ENCODE measurements at regions of chr17 and their contacts with region 1.

Region 1: GRCh38 chr17:75271233-75271954 is 363 bp upstream of the MIF4GD start:
- DNase-seq: peak; percentile 80 to 96 (median 90)
- ATAC-seq: peak; percentile 96
- H3K4me3 ChIP-seq: peak overlapping the region; percentile 75
- H3K4me3 Mint-ChIP-seq: peak overlapping the region; percentile 67 to 87 (median 84)
- H3K27ac ChIP-seq: peak overlapping the region; percentile 84
- H3K27ac Mint-ChIP-seq: peak overlapping the region; percentile 57 to 90 (median 85)
- H3K4me1 ChIP-seq: peaks cover 15 to 24% of the 10 kb centered on the region in 2 donors
- H3K4me1 Mint-ChIP-seq: peaks cover 5 to 41% (median 34%) of the 10 kb centered on the region in 7 donors
- H3K27me3 ChIP-seq: no peaks in the 10 kb centered on the region
- H3K27me3 Mint-ChIP-seq: no peaks in the 10 kb centered on the region

Region 2: DNA sequence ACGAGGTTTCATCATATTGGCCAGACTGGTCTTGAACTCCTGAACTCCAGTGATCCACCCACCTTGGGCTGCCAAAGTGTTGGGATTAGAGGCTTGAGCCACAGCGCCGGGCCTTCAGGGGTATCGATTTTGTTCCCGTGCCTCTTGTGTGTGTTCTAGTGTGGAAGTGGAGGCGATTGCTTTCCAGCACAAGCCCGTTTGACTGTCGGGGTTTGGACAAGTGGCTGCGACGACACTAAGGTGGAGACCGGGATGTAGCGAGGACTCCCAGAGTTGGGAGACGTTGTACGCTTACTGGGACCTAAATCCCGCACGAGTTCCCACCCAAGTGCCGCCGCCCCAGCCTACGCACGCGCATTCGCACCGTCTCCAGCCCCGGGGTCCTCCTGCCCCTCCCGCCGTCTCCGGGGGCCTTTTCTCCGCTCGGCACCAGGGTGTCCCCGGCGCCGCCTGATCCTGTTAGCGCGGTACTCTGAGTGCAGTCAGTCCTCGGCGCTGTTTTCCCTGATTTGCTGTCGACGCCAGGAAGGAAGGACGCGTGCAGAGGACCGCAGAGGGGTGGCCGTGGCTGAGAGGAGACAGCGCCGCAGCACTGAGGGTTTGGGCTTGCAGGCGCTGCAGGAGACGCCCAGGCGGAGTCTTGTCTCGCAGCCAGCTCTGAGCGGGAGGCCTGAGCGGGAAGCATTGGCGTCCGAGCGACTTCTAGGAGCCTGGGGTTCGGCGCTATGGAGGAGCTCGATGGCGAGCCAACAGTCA is 66.2 kb before region 1 on chr17 and contains the start of gene NUP85:
- CTCF ChIA-PET with region 1: no interaction called
- POLR2A ChIA-PET with region 1: interaction called, 3 read pairs
- intact Hi-C with region 1: loop called in 1 of 2 experiments (anchors 1 kb)
- DNase-seq: peak; percentile 87 to 97 (median 93)
- ATAC-seq: peak; percentile 96
- H3K4me3 ChIP-seq: peak within 1 kb of the TSS; percentile 82
- H3K4me3 Mint-ChIP-seq: peak within 1 kb of the TSS; percentile 91 to 98 (median 96)
- H3K27ac ChIP-seq: peak within 1 kb of the TSS; percentile 95
- H3K27ac Mint-ChIP-seq: peak within 1 kb of the TSS; percentile 94 to 100 (median 99)
- H3K4me1 ChIP-seq: peaks cover 0 to 5% of the 10 kb centered on the region in 2 donors
- H3K4me1 Mint-ChIP-seq: peaks cover 12 to 47% (median 26%) of the 10 kb centered on the region in 7 donors
- H3K27me3 ChIP-seq: no peaks in the 10 kb centered on the region
- H3K27me3 Mint-ChIP-seq: no peaks in the 10 kb centered on the region
- total RNA-seq, gene NUP85: 96.3 to 143 (median 99.2) TPM

Region 3: DNA sequence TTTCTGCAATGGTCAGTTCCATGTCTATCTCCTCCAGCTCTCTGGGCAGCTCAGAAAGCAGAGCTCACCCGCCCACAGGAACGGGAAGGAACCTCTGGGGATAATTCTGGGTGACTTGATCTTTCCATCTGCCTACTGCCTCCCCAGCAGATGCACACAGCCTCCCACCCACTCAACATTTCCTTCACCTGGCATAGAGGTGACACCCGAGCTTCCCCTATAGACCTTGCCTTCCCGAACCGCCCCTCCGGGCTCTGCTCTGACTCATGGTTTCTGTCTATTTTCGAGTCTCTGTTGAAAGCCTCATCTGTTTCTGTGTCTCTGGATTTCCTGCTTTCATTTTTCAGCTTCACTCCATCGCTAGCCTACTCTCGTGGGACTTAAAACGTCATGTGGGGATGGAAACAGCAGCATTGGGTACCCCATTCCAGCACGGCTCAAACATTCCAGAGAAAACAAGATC is 21.4 kb before region 1 on chr17:
- CTCF ChIA-PET with region 1: no interaction called
- POLR2A ChIA-PET with region 1: interaction called, 22 read pairs
- intact Hi-C with region 1: no loop called
- DNase-seq: peak in 6 of 9 donors; percentile 30 to 80 (median 36)
- ATAC-seq: peak; percentile 85
- H3K4me3 ChIP-seq: peak overlapping the region; percentile 40
- H3K4me3 Mint-ChIP-seq: peak overlapping the region; percentile 57 to 89 (median 72)
- H3K27ac ChIP-seq: peak overlapping the region; percentile 64
- H3K27ac Mint-ChIP-seq: peak overlapping the region; percentile 81 to 99 (median 90)
- H3K4me1 ChIP-seq: peaks cover 9 to 15% of the 10 kb centered on the region in 2 donors
- H3K4me1 Mint-ChIP-seq: peaks cover 35 to 57% (median 52%) of the 10 kb centered on the region in 7 donors
- H3K27me3 ChIP-seq: no peaks in the 10 kb centered on the region
- H3K27me3 Mint-ChIP-seq: no peaks in the 10 kb centered on the region

Region 4: DNA sequence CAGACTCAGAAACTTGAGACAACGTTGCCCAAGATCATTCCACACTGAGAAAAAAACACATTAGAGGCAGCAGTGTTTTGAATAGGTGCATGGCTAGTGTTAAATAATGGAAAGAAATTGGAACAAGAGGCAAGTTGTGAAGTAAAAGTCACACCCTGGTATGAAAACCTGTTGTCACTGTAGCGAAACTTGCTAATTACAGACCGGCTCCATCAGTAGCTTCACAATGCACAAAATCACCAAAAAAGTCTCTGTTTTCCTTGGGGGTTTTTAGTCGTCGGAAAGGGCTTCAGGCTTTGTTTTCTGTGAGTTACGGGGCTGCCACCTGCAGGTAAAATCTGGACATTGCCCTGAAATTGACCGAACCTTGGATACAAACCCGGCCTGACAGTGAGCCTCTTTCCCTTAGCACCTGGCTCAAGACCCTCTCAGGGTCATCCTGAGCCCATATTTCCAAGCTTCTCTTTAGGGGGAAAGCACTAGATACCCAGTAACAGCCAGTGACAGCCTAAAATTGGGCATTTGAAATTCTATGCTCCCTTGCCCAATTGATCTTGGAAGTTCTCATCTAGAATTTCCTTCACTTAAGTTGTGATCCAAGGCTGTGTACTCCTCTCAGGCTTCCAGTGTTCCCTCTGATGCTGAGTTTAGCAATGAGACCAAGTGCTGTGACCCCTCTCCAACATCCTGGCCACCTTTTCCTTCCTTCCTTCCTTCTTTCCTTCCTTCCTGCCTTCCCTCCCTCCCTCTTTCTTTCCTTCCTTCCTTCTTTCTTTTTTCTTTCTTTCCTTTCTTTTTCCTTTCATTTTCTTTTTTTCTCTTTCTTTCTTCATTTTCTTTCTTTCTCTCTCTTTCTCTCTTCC is 141.3 kb after region 1 on chr17:
- CTCF ChIA-PET with region 1: interaction called, 7 read pairs
- POLR2A ChIA-PET with region 1: interaction called, 4 read pairs
- intact Hi-C with region 1: loop called (anchors 1 kb)
- DNase-seq: peak; percentile 52 to 82 (median 73)
- ATAC-seq: peak; percentile 88
- H3K4me3 ChIP-seq: peak overlapping the region; percentile 25
- H3K4me3 Mint-ChIP-seq: peak overlapping the region; percentile 23 to 75 (median 60)
- H3K27ac ChIP-seq: peak overlapping the region; percentile 19
- H3K27ac Mint-ChIP-seq: peak overlapping the region in 6 of 9 donors; percentile 15 to 87 (median 45)
- H3K4me1 ChIP-seq: peaks cover 3 to 13% of the 10 kb centered on the region in 2 donors
- H3K4me1 Mint-ChIP-seq: peaks cover 14 to 26% (median 23%) of the 10 kb centered on the region in 7 donors
- H3K27me3 ChIP-seq: no peaks in the 10 kb centered on the region
- H3K27me3 Mint-ChIP-seq: peaks cover 0 to 27% (median 0%) of the 10 kb centered on the region in 5 donors

Region 5: GRCh38 chr17:75667021-75667790 is 395.8 kb after region 1 on chr17 and contains the starts of genes RECQL5 and SAP30BP:
- CTCF ChIA-PET with region 1: no interaction called
- POLR2A ChIA-PET with region 1: no interaction called
- intact Hi-C with region 1: loop called in 1 of 2 experiments (anchors 1 kb)
- DNase-seq: peak; percentile 94 to 98 (median 96)
- ATAC-seq: peak; percentile 100
- H3K4me3 ChIP-seq: peak within 1 kb of the TSS; percentile 99
- H3K4me3 Mint-ChIP-seq: peak within 1 kb of the TSS in 6 of 10 donors; percentile 59 to 74 (median 64)
- H3K27ac ChIP-seq: peak within 1 kb of the TSS; percentile 96
- H3K27ac Mint-ChIP-seq: peak within 1 kb of the TSS in 5 of 9 donors; percentile 6 to 83 (median 60)
- H3K4me1 ChIP-seq: peaks cover 21 to 26% of the 10 kb centered on the region in 2 donors
- H3K4me1 Mint-ChIP-seq: peaks cover 11 to 34% (median 21%) of the 10 kb centered on the region in 7 donors
- H3K27me3 ChIP-seq: no peaks in the 10 kb centered on the region
- H3K27me3 Mint-ChIP-seq: no peaks in the 10 kb centered on the region
- total RNA-seq, gene RECQL5: 38.7 to 76.5 (median 49.2) TPM
- total RNA-seq, gene SAP30BP: 97.6 to 198 (median 116) TPM